SK-N-SH (cell line): ENCODE measurements at regions of chr12 and their contacts with region 1.

Region 1: DNA sequence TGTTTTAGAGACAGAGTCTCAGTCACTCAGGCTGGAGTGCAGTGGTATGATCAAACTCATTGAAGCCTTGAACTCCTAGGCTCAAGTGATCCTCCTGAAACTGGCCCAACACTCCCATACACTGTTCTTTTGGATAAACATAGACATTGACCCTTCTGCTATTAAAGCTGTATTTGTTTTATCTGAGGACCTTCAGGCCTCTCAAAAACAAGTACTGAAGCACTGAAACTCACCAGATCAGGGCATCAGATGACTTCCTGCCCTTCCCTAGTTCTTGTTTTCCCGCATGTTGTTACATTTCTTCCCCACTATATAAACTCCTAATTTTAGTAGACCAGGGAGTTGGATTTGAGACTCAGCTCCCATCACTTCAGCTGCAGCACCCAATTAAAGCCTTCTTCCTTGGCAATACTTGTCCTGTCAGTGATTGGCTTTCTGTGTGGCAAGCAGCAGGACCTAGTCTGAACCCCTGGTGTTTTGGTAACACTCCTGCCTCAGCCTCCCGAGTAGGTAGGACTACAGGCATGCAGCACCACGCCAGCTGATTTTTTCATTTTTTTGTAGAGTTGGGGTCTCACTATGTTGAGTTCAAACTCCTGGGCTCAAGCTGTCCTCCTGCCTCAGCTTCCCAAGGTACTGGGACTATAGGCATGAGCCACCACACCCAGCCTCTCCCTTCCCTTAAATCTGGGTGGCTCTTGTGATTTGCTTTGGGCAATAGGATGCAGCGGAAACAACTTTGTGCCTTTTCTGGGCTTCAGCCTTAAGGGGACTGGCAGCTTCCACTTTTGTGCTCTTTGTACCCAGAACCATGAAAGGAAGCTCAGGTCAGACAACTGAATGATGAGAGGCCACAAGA is 12.5 kb upstream of the IFT81 start:
- DNase-seq: no peak
- H3K4me3 ChIP-seq: no peak overlapping the region
- H3K27ac ChIP-seq: no peak overlapping the region
- H3K4me1 ChIP-seq: peaks cover 18 to 20% of the 10 kb centered on the region in 2 experiments
- H3K27me3 ChIP-seq: no peaks in the 10 kb centered on the region
- CTCF ChIP-seq: no peak
- EP300 ChIP-seq: no peak
- RAD21 ChIP-seq: no peak

Region 2: DNA sequence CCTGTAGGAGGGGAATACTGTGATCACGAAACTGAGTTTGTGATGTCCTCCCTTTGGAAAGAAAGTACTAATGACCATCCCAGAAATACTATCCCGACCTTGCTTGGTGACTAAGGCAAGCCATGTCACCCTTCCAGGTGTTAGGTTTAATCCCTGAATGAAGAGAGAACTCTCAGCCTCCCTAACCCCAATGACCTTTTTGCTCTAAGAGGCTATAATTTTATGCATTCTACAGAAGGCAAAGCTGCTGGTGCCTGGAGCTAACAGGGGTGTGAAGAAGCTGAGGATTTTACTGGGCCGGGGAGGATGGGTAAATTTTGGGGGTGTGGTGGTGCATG is 55.6 kb before region 1 on chr12:
- CTCF ChIA-PET with region 1: no interaction called
- POLR2A ChIA-PET with region 1: no interaction called
- DNase-seq: no peak
- H3K4me3 ChIP-seq: no peak overlapping the region
- H3K27ac ChIP-seq: peak overlapping the region in 1 of 2 experiments; percentile 88; a peak in 2 of 4 replicates
- H3K4me1 ChIP-seq: peaks cover 0 to 22% of the 10 kb centered on the region in 2 experiments; a peak in 2 of 4 replicates
- H3K27me3 ChIP-seq: no peaks in the 10 kb centered on the region
- CTCF ChIP-seq: no peak
- EP300 ChIP-seq: no peak
- RAD21 ChIP-seq: no peak

Region 3: DNA sequence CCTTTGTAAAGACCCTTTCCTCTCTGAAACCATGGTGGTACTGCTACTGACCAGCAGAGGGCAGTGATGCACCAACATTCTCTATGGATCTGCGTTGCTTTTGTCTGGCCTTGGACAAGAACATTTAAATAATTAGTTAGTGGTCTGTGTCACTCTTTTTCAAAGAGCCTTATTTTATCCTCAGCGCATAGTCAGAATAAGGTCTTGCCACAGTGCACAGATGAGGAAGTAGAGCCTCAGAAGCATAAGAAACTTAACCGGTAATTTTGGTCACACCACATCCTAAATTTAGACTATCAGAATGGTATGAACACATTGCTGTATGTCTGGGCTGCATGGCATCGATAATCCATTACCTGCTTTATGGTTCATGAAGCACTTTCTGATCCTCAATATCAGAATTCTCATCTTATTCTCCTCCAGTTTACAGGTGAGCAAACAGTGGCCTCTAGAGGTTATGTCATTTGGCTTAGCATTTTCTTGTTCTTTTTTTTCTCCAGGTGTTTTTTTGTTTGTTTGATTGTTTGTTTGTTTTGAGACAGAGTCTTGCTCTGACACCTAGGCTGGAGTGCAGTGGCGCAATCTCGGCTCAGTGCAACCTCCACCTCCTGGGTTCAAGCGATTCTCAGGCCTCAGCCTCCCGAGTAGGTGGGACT is 11.3 kb before region 1 on chr12:
- CTCF ChIA-PET with region 1: interaction called, 14 read pairs
- POLR2A ChIA-PET with region 1: no interaction called
- DNase-seq: peak; percentile 65
- H3K4me3 ChIP-seq: no peak overlapping the region; a peak in 1 of 4 replicates
- H3K27ac ChIP-seq: no peak overlapping the region
- H3K4me1 ChIP-seq: no peaks in the 10 kb centered on the region
- H3K27me3 ChIP-seq: no peaks in the 10 kb centered on the region
- CTCF ChIP-seq: peak; percentile 96
- EP300 ChIP-seq: no peak
- RAD21 ChIP-seq: peak; percentile 96